Activated T-helper 2 cell treated with anti-CD3 and anti-CD28 coated beads, Interferon-gamma antibody, Interleukin-2, Interleukin-4, amounts not matched to agents 10 μg/mL and 5 μg/mL and 100 μg/mL, durations not matched to agents 14 hours and 24 hours and 36 hours (primary cell): ENCODE measurements at regions of chr7 and their contacts with region 1.

Region 1: DNA sequence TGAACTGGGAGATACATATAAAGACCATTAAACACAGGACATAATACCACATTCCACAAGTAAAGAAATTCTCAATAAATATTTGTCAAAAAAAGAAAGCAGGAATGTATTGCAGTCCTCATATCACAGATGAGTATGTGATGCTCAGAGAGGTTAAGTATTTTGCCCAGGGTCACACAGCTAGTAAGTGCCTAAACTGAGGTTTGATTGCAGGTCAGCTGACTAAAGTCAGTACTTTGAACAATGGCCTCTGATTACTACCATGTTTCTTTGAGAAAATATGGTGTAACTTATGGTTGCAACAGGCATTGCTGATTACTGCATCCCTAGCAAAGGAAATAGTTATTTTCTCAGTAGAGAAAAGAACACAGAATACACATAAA is 267.1 kb downstream of the ELMO1 start:
- DNase-seq: no peak
- H3K4me3 Mint-ChIP-seq: no peak overlapping the region
- H3K27ac Mint-ChIP-seq: no peak overlapping the region
- H3K4me1 Mint-ChIP-seq: peaks cover 16% of the 10 kb centered on the region
- H3K27me3 Mint-ChIP-seq: no peaks in the 10 kb centered on the region

Region 2: GRCh38 chr7:36633377-36633776 is 548.2 kb before region 1 on chr7:
- intact Hi-C with region 1: no loop called
- DNase-seq: no peak
- H3K4me3 Mint-ChIP-seq: no peak overlapping the region
- H3K27ac Mint-ChIP-seq: no peak overlapping the region
- H3K4me1 Mint-ChIP-seq: peaks cover 8% of the 10 kb centered on the region
- H3K27me3 Mint-ChIP-seq: no peaks in the 10 kb centered on the region

Region 3: GRCh38 chr7:36670585-36671431 is 510.7 kb before region 1 on chr7:
- intact Hi-C with region 1: loop called (anchors 2 kb)
- DNase-seq: peak; percentile 57
- H3K4me3 Mint-ChIP-seq: peak overlapping the region; percentile 57
- H3K27ac Mint-ChIP-seq: peak overlapping the region; percentile 86
- H3K4me1 Mint-ChIP-seq: peaks cover 58% of the 10 kb centered on the region
- H3K27me3 Mint-ChIP-seq: no peaks in the 10 kb centered on the region

Region 4: GRCh38 chr7:36986429-36987362 is 194.8 kb before region 1 on chr7:
- intact Hi-C with region 1: loop called (anchors 1 kb)
- DNase-seq: peak; percentile 34
- H3K4me3 Mint-ChIP-seq: no peak overlapping the region
- H3K27ac Mint-ChIP-seq: peak overlapping the region; percentile 21
- H3K4me1 Mint-ChIP-seq: peaks cover 31% of the 10 kb centered on the region
- H3K27me3 Mint-ChIP-seq: no peaks in the 10 kb centered on the region

Region 5: DNA sequence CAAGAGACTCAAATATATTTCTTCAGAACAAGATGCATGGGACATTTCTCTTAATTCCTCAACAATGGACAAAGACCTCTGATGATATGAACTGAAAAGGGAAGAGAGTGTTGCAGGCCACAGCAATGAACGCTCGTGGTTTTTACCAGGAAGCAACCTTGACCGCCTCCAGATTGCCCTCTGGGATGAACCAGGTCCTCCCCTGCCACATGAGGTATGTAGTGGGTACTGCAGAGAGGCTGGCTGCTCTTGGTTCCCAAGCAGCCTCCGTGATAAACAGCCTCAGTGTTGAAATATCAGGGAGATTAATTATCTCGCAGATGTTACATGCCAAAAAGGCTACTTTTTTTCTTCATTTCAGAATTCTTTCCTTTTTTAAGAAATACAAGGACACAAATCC is 71.7 kb before region 1 on chr7:
- intact Hi-C with region 1: no loop called
- DNase-seq: no peak
- H3K4me3 Mint-ChIP-seq: no peak overlapping the region
- H3K27ac Mint-ChIP-seq: peak overlapping the region; percentile 46
- H3K4me1 Mint-ChIP-seq: peaks cover 38% of the 10 kb centered on the region
- H3K27me3 Mint-ChIP-seq: no peaks in the 10 kb centered on the region